ENCODE measurements at regions of chr3 and their contacts with region 1.

Region 1: DNA sequence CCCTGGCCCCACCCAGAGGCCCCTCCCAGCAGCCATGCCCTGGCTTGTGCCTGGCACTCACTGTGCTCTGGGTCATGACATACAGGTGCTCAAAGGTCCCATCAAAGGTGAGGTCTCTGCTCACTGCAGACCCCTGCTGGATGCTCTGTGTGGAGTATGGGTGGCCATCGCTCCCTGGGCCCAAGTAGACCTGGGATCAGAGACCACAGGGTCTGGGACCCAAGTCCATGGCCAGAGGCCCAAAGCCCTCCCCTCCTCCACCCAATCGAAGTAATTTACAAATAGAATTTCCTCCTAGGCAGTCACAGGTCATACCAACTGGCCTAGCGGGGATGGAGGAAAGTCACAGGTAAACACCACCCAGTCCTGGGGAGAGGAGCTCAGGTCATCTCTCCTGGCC is 7.6 kb downstream of the PLXNB1 start:
- DNase-seq: no peak
- H3K4me3 ChIP-seq: no peak overlapping the region
- H3K27ac ChIP-seq: no peak overlapping the region
- H3K4me1 ChIP-seq: peaks cover 0 to 22% (median 4%) of the 10 kb centered on the region in 4 experiments; a peak in 6 of 7 replicates
- H3K27me3 ChIP-seq: no peaks in the 10 kb centered on the region
- CTCF ChIP-seq: peak in 1 of 3 experiments; percentile 28; a peak in 1 of 4 replicates
- EP300 ChIP-seq: no peak
- POLR2A ChIP-seq: no peak
- RAD21 ChIP-seq: peak; percentile 7 to 10; a peak in 1 of 4 replicates

Region 2: DNA sequence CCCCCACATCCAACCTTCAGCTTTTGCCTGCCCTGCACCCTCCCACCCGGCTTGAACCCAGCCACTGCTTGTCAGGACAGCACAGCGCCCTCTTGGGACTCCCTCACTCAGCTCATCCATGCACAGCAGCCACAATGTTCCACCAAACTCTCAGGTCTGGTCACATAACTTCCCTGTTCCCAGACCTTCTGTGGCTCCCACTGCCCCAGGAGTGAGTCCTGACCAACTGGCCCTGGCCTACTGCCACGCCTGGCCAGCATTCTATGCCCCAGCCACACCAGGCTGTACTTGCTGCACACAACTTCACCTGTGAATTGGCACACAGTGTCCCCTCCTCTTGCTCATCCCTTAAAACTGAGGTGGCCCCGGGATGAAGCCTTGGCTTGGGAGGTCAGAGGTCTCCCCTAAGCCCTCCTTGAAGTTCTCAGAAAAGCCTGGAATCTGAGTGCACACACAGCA is 13.4 kb before region 1 on chr3:
- CTCF ChIA-PET with region 1: interaction called, 95 read pairs
- POLR2A ChIA-PET with region 1: interaction called, 650 read pairs
- DNase-seq: no peak
- H3K4me3 ChIP-seq: no peak overlapping the region
- H3K27ac ChIP-seq: no peak overlapping the region
- H3K4me1 ChIP-seq: no peaks in the 10 kb centered on the region
- H3K27me3 ChIP-seq: no peaks in the 10 kb centered on the region
- CTCF ChIP-seq: peak in 2 of 3 experiments; percentile 30 to 50; a peak in 2 of 4 replicates
- EP300 ChIP-seq: no peak
- POLR2A ChIP-seq: no peak
- RAD21 ChIP-seq: peak in 1 of 2 experiments; percentile 28; a peak in 1 of 4 replicates

Region 3: GRCh38 chr3:48492543-48493501 is 70.6 kb after region 1 on chr3:
- CTCF ChIA-PET with region 1: no interaction called
- POLR2A ChIA-PET with region 1: no interaction called
- DNase-seq: no peak
- H3K4me3 ChIP-seq: no peak overlapping the region
- H3K27ac ChIP-seq: no peak overlapping the region
- H3K4me1 ChIP-seq: no peaks in the 10 kb centered on the region; a peak in 1 of 7 replicates
- H3K27me3 ChIP-seq: no peaks in the 10 kb centered on the region
- CTCF ChIP-seq: no peak
- EP300 ChIP-seq: no peak
- POLR2A ChIP-seq: no peak
- RAD21 ChIP-seq: no peak